Activated CD4-positive, alpha-beta T cell treated with anti-CD3 and anti-CD28 coated beads, Interleukin-2, amount 10 ng/mL, durations not matched to agents 24 days and 14 days (primary cell): ENCODE measurements at regions of chr17 and their contacts with region 1.

Region 1: DNA sequence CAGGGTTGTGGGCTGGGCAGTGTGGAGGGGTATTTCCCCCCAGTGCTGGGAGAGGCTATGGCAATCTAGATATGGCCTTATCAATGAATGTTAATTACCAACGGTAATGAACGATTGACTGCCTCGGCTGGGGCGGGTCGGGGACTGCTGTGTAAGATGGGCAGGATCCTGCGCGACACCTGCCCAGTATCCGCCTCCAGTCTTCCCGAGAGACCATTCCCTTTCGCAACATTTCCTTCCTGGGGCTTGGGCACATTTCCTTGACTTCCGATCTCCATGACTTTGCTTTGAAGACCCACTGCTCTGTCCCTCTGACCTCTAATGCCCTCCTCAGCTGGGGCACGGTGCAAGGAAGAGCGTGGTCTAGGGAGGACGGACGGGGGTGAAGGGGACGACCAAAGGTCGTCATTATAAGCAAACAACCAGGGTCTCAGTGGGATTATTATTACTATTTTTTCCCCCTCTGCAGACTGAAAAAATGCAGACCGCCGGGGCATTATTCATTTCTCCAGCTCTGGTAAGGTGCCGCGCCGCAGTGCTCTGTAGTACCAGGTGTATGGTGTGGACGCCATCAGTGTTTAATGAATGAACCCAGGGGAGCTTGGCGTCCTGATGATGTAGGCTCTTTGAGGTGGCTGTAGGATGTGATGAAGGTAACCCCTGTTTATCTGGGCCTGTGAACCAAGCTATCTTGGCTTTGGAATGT is 506 bp downstream of the ATP5MC1 start:
- DNase-seq: no peak
- H3K4me3 Mint-ChIP-seq: peak overlapping the region; percentile 90
- H3K27ac Mint-ChIP-seq: peak overlapping the region; percentile 97
- H3K4me1 Mint-ChIP-seq: peaks cover 18% of the 10 kb centered on the region
- H3K27me3 Mint-ChIP-seq: peaks cover 3% of the 10 kb centered on the region

Region 2: DNA sequence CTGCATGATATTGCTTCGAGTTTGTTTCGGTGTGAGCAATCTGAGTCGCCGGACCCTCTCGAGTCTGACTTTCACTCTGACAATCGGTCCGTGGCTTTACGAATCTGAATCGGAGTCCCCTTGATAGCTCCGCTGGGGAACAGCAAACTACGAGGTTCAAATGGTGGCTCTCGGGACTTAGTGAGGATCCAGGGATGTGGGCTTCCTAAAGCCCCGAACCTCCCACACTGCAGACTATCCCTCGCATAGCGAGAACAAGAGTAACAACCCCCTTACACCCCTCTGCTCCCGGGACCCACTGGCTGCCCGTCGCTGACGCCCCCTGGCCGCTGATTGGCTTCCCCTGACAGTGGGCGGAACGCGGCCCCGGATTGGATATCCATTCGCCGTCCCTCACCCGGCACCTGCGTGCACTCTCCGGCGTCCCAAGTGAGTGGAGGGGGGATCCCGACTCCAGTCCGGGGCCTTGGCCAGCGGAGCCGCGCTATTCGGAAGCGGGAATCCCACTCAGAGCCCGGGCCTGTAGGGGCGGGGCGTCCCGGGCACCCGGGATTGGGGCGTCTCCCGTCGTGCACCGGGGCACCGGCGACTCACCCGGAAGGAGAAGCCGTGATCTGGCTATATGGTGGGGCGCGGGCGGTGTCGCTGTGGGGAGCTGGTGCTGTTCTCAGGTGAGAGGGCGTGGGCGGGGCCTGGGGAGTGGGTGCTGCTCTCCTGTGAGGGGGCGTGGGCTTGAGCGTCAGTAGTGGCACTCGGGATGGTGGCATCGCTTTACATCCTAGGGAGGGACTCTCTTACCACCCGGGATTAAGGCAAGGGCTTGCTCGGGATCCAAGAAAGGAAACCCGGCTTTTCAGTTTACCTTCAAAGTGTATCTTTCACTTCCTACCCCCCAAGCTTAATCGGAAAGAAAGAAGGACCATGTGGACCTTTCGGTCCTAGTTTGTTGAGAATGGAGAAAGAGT is 785.6 kb before region 1 on chr17 and contains the start of gene SNX11:
- intact Hi-C with region 1: loop called (anchors 10 kb)
- DNase-seq: peak; percentile 98
- H3K4me3 Mint-ChIP-seq: peak within 1 kb of the TSS; percentile 98
- H3K27ac Mint-ChIP-seq: peak within 1 kb of the TSS; percentile 95
- H3K4me1 Mint-ChIP-seq: peaks cover 51% of the 10 kb centered on the region
- H3K27me3 Mint-ChIP-seq: no peaks in the 10 kb centered on the region
- total RNA-seq, gene SNX11: 33.3 and 34.9 TPM in 2 replicates

Region 3: GRCh38 chr17:48825446-48826381 is 67.4 kb before region 1 on chr17:
- intact Hi-C with region 1: no loop called
- DNase-seq: no peak
- H3K4me3 Mint-ChIP-seq: no peak overlapping the region
- H3K27ac Mint-ChIP-seq: no peak overlapping the region
- H3K4me1 Mint-ChIP-seq: peaks cover 4% of the 10 kb centered on the region
- H3K27me3 Mint-ChIP-seq: peaks cover 20% of the 10 kb centered on the region

Region 4: DNA sequence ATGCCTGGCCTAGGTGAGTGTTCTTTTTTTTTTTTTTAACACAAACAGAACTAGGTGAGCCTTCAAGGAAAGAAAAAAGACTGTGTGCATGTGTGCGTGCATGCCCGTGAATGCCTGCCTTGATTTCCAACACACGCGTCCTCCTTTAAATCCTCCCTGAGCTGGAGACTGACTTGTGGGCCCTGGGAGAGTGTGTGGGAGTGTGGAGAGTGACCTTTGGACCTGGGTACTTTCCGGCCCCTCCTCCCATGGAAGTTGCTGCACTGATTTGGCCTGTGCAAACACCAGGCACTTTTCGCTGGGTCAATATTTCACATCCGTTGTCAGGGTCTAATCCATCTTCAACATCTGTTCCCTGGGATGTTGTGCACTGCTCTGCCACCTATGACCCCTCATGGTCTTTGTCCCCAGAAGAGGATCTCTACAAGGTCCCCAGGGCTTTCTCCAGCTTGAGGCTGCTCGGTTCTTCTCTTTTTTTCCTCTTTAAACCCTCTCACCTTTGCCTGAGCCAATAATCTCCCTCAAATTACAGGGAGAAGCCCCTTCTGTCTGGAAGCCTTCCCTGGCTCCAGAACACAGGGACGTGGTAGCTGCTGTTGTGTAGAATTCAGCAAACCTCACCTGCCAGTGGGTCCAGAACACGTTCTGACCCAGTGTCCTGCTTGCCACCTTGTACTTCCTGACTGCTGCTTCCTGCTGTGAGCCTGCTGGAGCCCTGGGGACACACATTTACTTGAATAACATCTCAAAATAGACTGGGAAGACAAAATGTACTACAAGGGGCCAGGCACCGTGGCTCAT is 21.3 kb before region 1 on chr17:
- intact Hi-C with region 1: no loop called
- DNase-seq: no peak
- H3K4me3 Mint-ChIP-seq: no peak overlapping the region
- H3K27ac Mint-ChIP-seq: no peak overlapping the region
- H3K4me1 Mint-ChIP-seq: peaks cover 4% of the 10 kb centered on the region
- H3K27me3 Mint-ChIP-seq: peaks cover 7% of the 10 kb centered on the region

Region 5: DNA sequence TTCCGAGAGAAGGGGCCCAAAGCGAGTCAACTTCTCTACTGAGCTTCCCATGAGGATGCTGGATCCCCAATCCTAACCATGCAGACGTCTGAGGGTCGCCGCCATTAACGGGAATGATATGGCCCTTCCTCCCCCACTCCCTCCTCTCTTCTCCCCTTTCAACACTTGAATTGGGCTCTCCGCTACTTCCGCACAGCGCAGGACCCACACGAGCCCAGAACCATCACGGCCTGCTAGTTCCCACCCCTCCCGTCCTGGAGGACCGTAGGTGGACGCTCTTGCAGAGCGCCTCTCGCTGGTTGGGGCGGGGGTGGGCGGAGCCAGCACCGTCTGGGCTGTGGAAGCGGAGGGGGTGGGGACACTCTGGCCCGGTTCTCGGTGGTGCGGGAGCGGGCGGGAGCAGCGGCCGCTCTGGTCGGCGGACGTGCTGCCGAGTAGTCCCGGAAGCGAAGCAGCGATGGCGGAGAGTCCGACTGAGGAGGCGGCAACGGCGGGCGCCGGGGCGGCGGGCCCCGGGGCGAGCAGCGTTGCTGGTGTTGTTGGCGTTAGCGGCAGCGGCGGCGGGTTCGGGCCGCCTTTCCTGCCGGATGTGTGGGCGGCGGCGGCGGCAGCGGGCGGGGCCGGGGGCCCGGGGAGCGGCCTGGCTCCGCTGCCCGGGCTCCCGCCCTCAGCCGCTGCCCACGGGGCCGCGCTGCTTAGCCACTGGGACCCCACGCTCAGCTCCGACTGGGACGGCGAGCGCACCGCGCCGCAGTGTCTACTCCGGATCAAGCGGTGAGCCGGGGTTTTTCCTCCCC is 15.2 kb after region 1 on chr17 and contains the start of gene UBE2Z:
- intact Hi-C with region 1: loop called (anchors 1 kb)
- DNase-seq: peak; percentile 95
- H3K4me3 Mint-ChIP-seq: peak within 1 kb of the TSS; percentile 96
- H3K27ac Mint-ChIP-seq: peak within 1 kb of the TSS; percentile 98
- H3K4me1 Mint-ChIP-seq: peaks cover 39% of the 10 kb centered on the region
- H3K27me3 Mint-ChIP-seq: no peaks in the 10 kb centered on the region
- total RNA-seq, gene UBE2Z: 89.3 and 91.4 TPM in 2 replicates